MCF 10A (cell line): ENCODE measurements at regions of chr2 and their contacts with region 1.

Region 1: GRCh38 chr2:20822535-20823490 is at the start of gene LDAH:
- DNase-seq: peak; percentile 80
- H3K4me3 Mint-ChIP-seq: peak within 1 kb of the TSS; percentile 94
- H3K27ac Mint-ChIP-seq: peak within 1 kb of the TSS; percentile 99
- H3K4me1 Mint-ChIP-seq: peaks cover 6% of the 10 kb centered on the region
- H3K27me3 Mint-ChIP-seq: no peaks in the 10 kb centered on the region
- CTCF ChIP-seq: no peak
- total RNA-seq, gene LDAH: 16.8 and 17.0 TPM in 2 replicates

Region 2: DNA sequence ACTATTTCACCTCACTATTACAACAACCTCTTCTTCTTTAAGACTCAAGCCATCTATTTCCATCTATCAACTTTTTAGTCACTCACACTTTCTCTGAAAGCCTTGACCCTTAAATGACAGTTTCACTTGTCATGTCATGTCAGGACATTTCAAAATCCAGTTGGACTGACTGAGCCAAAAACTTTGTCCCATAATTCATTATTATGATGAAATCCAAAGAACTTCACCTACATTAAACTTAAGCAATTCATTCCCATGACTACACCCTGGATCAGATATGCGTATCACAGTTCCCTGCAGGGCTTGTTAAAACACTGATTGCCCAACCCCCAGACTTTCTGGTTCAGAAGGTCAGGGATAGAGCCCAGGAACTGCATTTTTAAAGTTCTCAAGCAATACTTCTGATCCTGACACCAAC is 26.4 kb before region 1 on chr2:
- CTCF ChIA-PET with region 1: interaction called, 6 read pairs
- POLR2A ChIA-PET with region 1: interaction called, 17 read pairs
- intact Hi-C with region 1: no loop called
- DNase-seq: peak; percentile 92
- H3K4me3 Mint-ChIP-seq: peak overlapping the region; percentile 0
- H3K27ac Mint-ChIP-seq: peak overlapping the region; percentile 14
- H3K4me1 Mint-ChIP-seq: peaks cover 17% of the 10 kb centered on the region
- H3K27me3 Mint-ChIP-seq: no peaks in the 10 kb centered on the region
- CTCF ChIP-seq: no peak

Region 3: DNA sequence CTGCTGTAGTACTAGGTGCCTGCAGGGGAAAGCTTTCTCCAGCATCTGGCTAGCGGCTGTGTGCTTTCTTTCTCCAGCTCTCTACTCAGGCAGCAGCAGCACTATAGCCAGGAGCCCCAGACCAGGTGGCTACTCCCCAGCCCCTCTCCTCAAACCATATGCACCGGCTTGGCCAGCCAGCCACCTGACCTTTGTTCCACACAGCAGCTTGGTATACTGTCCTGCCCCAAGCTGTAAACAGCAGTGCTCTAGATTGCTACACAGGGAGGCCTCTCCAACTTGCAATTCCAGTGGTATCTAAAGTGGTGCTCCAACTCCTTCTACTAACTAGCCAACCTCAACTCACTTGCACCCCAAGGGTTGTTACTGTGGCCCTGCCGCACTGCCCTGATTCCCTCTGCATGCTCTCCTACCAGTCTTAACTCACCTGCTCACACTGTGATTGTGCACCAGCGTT is 19.6 kb before region 1 on chr2:
- CTCF ChIA-PET with region 1: no interaction called
- POLR2A ChIA-PET with region 1: interaction called, 17 read pairs
- intact Hi-C with region 1: no loop called
- DNase-seq: no peak
- H3K4me3 Mint-ChIP-seq: no peak overlapping the region
- H3K27ac Mint-ChIP-seq: no peak overlapping the region
- H3K4me1 Mint-ChIP-seq: no peaks in the 10 kb centered on the region
- H3K27me3 Mint-ChIP-seq: no peaks in the 10 kb centered on the region
- CTCF ChIP-seq: no peak

Region 4: DNA sequence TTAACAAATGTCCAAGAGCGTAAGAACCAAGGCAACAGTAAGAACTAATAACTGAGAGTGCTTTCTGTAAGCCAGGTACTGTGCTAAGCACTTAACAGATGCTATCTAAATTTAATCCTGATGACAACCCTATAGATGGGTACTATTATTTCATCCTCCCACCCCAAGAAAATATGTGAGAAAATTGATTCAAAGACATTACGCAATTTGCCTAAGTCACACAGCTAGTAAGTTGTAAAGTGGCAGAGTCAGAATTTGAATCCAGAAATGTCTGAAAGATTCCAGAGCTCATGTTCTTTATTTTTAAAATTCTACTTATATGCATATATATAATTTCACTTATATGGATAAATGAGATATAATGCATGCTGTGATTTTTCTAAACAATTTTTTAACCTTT is 10.0 kb before region 1 on chr2:
- CTCF ChIA-PET with region 1: no interaction called
- POLR2A ChIA-PET with region 1: interaction called, 24 read pairs
- intact Hi-C with region 1: no loop called
- DNase-seq: no peak
- H3K4me3 Mint-ChIP-seq: no peak overlapping the region
- H3K27ac Mint-ChIP-seq: no peak overlapping the region
- H3K4me1 Mint-ChIP-seq: no peaks in the 10 kb centered on the region
- H3K27me3 Mint-ChIP-seq: no peaks in the 10 kb centered on the region
- CTCF ChIP-seq: no peak